CD4-positive, alpha-beta memory T cell (primary cell): ENCODE measurements at regions of chr10 and their contacts with region 1.

Region 1: GRCh38 chr10:95841661-95842498 is 65.9 kb upstream of the CC2D2B start:
- DNase-seq: peak in 4 of 5 donors; percentile 28 to 57 (median 55)
- H3K4me3 ChIP-seq: no peak overlapping the region
- H3K4me3 Mint-ChIP-seq: no peak overlapping the region
- H3K27ac ChIP-seq: peak overlapping the region; percentile 35
- H3K27ac Mint-ChIP-seq: peak overlapping the region; percentile 26 to 88 (median 53)
- H3K4me1 ChIP-seq: peaks cover 8% of the 10 kb centered on the region
- H3K4me1 Mint-ChIP-seq: peaks cover 0 to 18% (median 3%) of the 10 kb centered on the region in 4 donors
- H3K27me3 ChIP-seq: no peaks in the 10 kb centered on the region
- H3K27me3 Mint-ChIP-seq: peaks cover 0 to 2% of the 10 kb centered on the region in 2 donors

Region 2: DNA sequence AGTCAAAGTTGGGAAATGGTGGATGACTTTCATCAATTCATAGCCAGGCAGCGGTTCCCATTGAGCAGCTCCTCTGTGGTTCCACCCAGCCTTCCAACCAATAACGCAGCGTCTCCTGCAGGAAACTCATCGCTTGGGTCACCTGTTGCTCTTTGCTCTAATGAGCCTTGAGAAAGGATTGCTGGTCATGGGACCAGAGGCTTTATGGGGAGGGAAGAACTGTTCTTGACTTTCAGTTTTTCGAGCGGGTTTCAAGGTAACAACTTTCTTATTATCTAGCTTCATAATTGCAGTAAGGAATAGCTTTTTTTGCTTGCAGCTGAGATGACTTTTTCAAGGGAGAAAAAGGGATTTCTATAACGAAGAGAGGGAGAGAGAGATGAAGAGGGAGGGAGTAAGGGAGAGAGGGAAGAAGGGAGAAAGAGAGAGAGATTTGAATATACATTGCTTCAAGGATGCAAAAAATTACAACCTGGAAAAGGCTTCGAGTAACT is 86.3 kb before region 1 on chr10:
- CTCF ChIA-PET with region 1: interaction called, 3 read pairs
- POLR2A ChIA-PET with region 1: no interaction called
- intact Hi-C with region 1: loop called (anchors 5 kb)
- DNase-seq: no peak
- H3K4me3 ChIP-seq: no peak overlapping the region
- H3K4me3 Mint-ChIP-seq: peak overlapping the region in 5 of 8 donors; percentile 11 to 71 (median 46)
- H3K27ac ChIP-seq: no peak overlapping the region
- H3K27ac Mint-ChIP-seq: peak overlapping the region in 2 of 7 donors; percentile 57 to 62
- H3K4me1 ChIP-seq: no peaks in the 10 kb centered on the region
- H3K4me1 Mint-ChIP-seq: peaks cover 2 to 22% (median 8%) of the 10 kb centered on the region in 4 donors
- H3K27me3 ChIP-seq: no peaks in the 10 kb centered on the region
- H3K27me3 Mint-ChIP-seq: peaks cover 1 to 18% of the 10 kb centered on the region in 2 donors

Region 3: DNA sequence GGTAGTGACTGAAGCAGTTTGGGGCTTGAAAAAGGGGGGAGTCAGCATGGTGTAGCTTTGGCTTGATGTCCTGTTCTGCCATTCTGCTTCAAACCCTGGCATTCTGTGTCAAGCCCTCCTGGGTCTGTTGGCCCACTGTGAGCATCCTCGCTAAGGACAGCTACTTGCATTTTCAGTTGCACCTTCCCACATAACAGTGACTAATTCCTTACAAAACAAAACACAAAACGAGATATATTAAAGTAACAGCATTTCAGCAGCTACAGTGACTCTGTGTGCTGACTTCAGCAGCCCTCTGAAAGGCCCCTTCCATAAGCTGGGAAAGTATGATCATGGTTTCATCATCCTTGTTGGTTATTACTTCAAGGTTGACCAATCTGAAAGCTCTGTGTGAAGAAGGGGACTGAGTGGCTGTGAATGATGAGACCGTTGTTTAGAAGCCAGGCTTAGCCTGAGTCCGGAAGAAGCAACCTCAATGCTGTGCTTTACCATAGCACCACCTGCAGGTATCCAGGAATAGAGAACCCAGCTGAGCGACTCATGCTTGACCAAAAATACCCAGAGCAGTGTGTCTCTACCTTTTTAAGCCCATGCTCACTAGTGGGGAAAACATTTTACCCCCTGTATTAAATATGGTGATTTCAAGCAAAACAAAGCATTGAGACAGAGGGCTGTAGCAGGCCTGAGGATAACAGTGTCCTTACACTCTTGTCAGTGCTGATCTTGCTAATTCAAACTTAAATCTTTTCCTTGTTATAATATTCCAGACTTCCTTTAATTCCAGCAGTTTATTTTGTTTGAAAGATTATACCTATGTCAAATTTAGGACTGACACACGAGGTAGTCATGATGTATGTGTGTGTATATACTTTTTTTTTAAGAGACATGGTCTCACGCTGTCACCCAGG is 23.3 kb after region 1 on chr10:
- CTCF ChIA-PET with region 1: interaction called, 11 read pairs
- POLR2A ChIA-PET with region 1: interaction called, 4 read pairs
- intact Hi-C with region 1: no loop called
- DNase-seq: peak; percentile 14 to 52 (median 41)
- H3K4me3 ChIP-seq: no peak overlapping the region
- H3K4me3 Mint-ChIP-seq: no peak overlapping the region
- H3K27ac ChIP-seq: no peak overlapping the region
- H3K27ac Mint-ChIP-seq: peak overlapping the region in 3 of 7 donors; percentile 61 to 77 (median 68)
- H3K4me1 ChIP-seq: peaks cover 4% of the 10 kb centered on the region
- H3K4me1 Mint-ChIP-seq: peaks cover 5 to 9% (median 8%) of the 10 kb centered on the region in 4 donors
- H3K27me3 ChIP-seq: no peaks in the 10 kb centered on the region
- H3K27me3 Mint-ChIP-seq: no peaks in the 10 kb centered on the region